A673 (cell line): ENCODE measurements at regions of chr18 and their contacts with region 1.

Region 1: GRCh38 chr18:12154361-12154760 is 60.7 kb downstream of the ANKRD62 start:
- DNase-seq: no peak
- H3K4me3 ChIP-seq: no peak overlapping the region
- H3K27ac ChIP-seq: no peak overlapping the region
- H3K4me1 ChIP-seq: no peaks in the 10 kb centered on the region
- H3K27me3 ChIP-seq: peaks cover 36% of the 10 kb centered on the region
- CTCF ChIP-seq: no peak

Region 2: GRCh38 chr18:12119358-12119757 is 35.0 kb before region 1 on chr18:
- CTCF ChIA-PET with region 1: no interaction called
- POLR2A ChIA-PET with region 1: no interaction called
- intact Hi-C with region 1: loop called (anchors 5 kb)
- DNase-seq: no peak
- H3K4me3 ChIP-seq: no peak overlapping the region
- H3K27ac ChIP-seq: no peak overlapping the region
- H3K4me1 ChIP-seq: no peaks in the 10 kb centered on the region
- H3K27me3 ChIP-seq: peaks cover 17% of the 10 kb centered on the region
- CTCF ChIP-seq: no peak